Activated B cell treated with CpG ODN at 0.5 μM for 24 hours (primary cell): ENCODE measurements at regions of chr1 and their contacts with region 1.

Region 1: GRCh38 chr1:7983086-7983778 is 21.7 kb downstream of the PARK7 start:
- DNase-seq: no peak
- ATAC-seq: no peak
- H3K4me3 Mint-ChIP-seq: no peak overlapping the region
- H3K27ac Mint-ChIP-seq: no peak overlapping the region
- H3K4me1 Mint-ChIP-seq: peaks cover 6% of the 10 kb centered on the region
- H3K27me3 Mint-ChIP-seq: no peaks in the 10 kb centered on the region
- CTCF ChIP-seq: no peak

Region 2: GRCh38 chr1:8348777-8349491 is 365.7 kb after region 1 on chr1:
- CTCF ChIA-PET with region 1: interaction called, 6 read pairs
- POLR2A ChIA-PET with region 1: no interaction called
- intact Hi-C with region 1: loop called (anchors 1 kb)
- DNase-seq: peak; percentile 64
- ATAC-seq: peak; percentile 89
- H3K4me3 Mint-ChIP-seq: no peak overlapping the region
- H3K27ac Mint-ChIP-seq: no peak overlapping the region
- H3K4me1 Mint-ChIP-seq: peaks cover 4% of the 10 kb centered on the region
- H3K27me3 Mint-ChIP-seq: no peaks in the 10 kb centered on the region
- CTCF ChIP-seq: no peak